Endothelial cell of umbilical vein (primary cell): ENCODE measurements at regions of chr22 and their contacts with region 1.

Region 1: DNA sequence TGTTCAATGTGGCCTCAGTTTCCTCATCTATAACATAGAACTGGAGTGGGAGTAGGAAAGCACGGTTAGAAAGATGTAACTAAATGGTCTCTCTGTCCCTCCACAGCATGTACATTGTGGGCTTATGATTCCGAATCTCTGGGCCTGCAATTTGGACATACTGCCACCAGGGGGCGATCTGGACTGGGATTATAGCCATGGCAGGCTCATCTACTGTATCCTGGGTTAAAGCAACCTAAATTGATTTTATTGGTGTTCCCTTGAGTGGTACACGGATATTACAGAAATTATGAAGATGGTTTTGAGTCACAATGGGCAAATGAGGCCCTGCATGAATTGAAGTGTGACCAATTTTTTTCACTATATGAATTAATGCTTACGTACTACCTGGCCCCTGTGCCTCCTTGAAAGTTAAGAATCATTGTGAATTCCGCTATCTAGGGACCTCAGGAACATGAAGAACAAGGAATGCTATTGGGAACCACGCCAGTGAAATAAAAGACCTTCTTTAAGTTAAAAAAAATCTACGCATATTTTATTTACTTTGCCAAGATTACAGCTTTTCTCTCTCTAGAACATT is 32.9 kb downstream of the TST start:
- DNase-seq: peak; percentile 13
- H3K4me3 ChIP-seq: no peak overlapping the region
- H3K27ac ChIP-seq: no peak overlapping the region
- H3K4me1 ChIP-seq: no peaks in the 10 kb centered on the region
- H3K27me3 ChIP-seq: peaks cover 9 to 12% of the 10 kb centered on the region in 2 experiments
- CTCF ChIP-seq: peak; percentile 63 to 86
- POLR2A ChIP-seq: no peak

Region 2: DNA sequence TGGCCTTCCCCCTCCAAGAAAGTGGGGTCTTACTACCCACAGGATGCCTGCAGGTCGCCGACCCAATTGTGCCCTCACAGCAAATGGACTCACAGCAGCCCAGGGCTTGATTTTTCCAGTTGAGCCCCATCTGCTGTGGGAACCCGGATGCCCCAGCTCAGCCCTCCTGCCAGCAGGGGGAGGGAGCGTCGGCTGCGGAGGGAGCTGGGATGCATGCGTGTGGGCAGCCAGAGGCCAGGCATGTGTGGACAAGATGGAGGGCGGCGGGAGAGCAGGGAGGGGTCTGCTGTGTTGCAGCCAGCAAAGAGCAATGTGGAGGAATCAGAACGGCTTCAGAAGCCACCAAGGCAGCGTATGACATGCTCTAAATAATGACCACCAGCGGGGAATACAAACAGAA is 416.3 kb before region 1 on chr22:
- CTCF ChIA-PET with region 1: no interaction called
- POLR2A ChIA-PET with region 1: no interaction called
- dilution Hi-C with region 1: no loop called
- intact Hi-C with region 1: loop called (anchors 10 kb)
- DNase-seq: peak; percentile 10
- H3K4me3 ChIP-seq: no peak overlapping the region
- H3K27ac ChIP-seq: no peak overlapping the region
- H3K4me1 ChIP-seq: no peaks in the 10 kb centered on the region
- H3K27me3 ChIP-seq: peaks cover 2 to 5% of the 10 kb centered on the region in 2 experiments
- CTCF ChIP-seq: peak; percentile 12 to 55
- POLR2A ChIP-seq: no peak